T-cell (primary cell): ENCODE measurements at regions of chrX and their contacts with region 1.

Region 1: GRCh38 chrX:30781711-30782444 is 107.2 kb downstream of the TAB3 start:
- DNase-seq: no peak
- ATAC-seq: no peak
- H3K4me3 ChIP-seq: no peak overlapping the region
- H3K4me3 Mint-ChIP-seq: no peak overlapping the region
- H3K27ac ChIP-seq: no peak overlapping the region
- H3K27ac Mint-ChIP-seq: no peak overlapping the region
- H3K4me1 ChIP-seq: no peaks in the 10 kb centered on the region
- H3K4me1 Mint-ChIP-seq: no peaks in the 10 kb centered on the region
- H3K27me3 ChIP-seq: peaks cover 0 to 4% of the 10 kb centered on the region in 2 experiments
- H3K27me3 Mint-ChIP-seq: peaks cover 2 to 3% of the 10 kb centered on the region in 2 donors

Region 2: DNA sequence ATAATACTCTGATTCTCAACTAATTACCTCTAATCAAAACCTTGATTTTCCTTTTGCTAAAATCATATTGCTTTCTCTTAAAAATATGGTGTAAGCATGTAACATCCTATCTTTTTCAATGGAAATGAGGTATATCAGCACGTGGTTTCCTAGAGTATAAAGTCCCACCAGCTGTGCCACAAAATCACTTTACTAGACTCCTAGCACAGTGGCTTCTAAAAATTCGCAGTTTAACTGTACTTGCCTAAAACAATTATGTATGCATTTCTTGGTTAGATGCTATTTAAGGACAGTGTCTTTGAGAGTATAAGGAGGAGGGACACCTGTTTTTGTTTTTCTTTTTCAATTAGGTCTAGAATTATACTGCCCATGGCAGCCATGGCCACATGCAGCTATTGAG is 65.9 kb before region 1 on chrX:
- CTCF ChIA-PET with region 1: no interaction called
- POLR2A ChIA-PET with region 1: no interaction called
- DNase-seq: no peak
- ATAC-seq: no peak
- H3K4me3 ChIP-seq: no peak overlapping the region
- H3K4me3 Mint-ChIP-seq: no peak overlapping the region
- H3K27ac ChIP-seq: no peak overlapping the region
- H3K27ac Mint-ChIP-seq: no peak overlapping the region
- H3K4me1 ChIP-seq: peaks cover 2% of the 10 kb centered on the region in 2 experiments
- H3K4me1 Mint-ChIP-seq: peaks cover 0 to 12% (median 8%) of the 10 kb centered on the region in 3 donors
- H3K27me3 ChIP-seq: no peaks in the 10 kb centered on the region
- H3K27me3 Mint-ChIP-seq: peaks cover 0 to 4% of the 10 kb centered on the region in 2 donors

Region 3: GRCh38 chrX:30748393-30748841 is 33.5 kb before region 1 on chrX:
- CTCF ChIA-PET with region 1: no interaction called
- POLR2A ChIA-PET with region 1: no interaction called
- DNase-seq: no peak
- ATAC-seq: no peak
- H3K4me3 ChIP-seq: no peak overlapping the region
- H3K4me3 Mint-ChIP-seq: no peak overlapping the region
- H3K27ac ChIP-seq: no peak overlapping the region
- H3K27ac Mint-ChIP-seq: no peak overlapping the region
- H3K4me1 ChIP-seq: no peaks in the 10 kb centered on the region
- H3K4me1 Mint-ChIP-seq: no peaks in the 10 kb centered on the region
- H3K27me3 ChIP-seq: no peaks in the 10 kb centered on the region
- H3K27me3 Mint-ChIP-seq: peaks cover 0 to 4% of the 10 kb centered on the region in 2 donors

Region 4: GRCh38 chrX:30762755-30763154 is 19.1 kb before region 1 on chrX:
- CTCF ChIA-PET with region 1: no interaction called
- POLR2A ChIA-PET with region 1: interaction called in 1 of 2 experiments, 10 read pairs
- DNase-seq: no peak
- ATAC-seq: no peak
- H3K4me3 ChIP-seq: no peak overlapping the region
- H3K4me3 Mint-ChIP-seq: no peak overlapping the region
- H3K27ac ChIP-seq: no peak overlapping the region
- H3K27ac Mint-ChIP-seq: no peak overlapping the region
- H3K4me1 ChIP-seq: no peaks in the 10 kb centered on the region
- H3K4me1 Mint-ChIP-seq: no peaks in the 10 kb centered on the region
- H3K27me3 ChIP-seq: no peaks in the 10 kb centered on the region
- H3K27me3 Mint-ChIP-seq: no peaks in the 10 kb centered on the region